ENCODE measurements at regions of chr9 and their contacts with region 1.

Region 1: DNA sequence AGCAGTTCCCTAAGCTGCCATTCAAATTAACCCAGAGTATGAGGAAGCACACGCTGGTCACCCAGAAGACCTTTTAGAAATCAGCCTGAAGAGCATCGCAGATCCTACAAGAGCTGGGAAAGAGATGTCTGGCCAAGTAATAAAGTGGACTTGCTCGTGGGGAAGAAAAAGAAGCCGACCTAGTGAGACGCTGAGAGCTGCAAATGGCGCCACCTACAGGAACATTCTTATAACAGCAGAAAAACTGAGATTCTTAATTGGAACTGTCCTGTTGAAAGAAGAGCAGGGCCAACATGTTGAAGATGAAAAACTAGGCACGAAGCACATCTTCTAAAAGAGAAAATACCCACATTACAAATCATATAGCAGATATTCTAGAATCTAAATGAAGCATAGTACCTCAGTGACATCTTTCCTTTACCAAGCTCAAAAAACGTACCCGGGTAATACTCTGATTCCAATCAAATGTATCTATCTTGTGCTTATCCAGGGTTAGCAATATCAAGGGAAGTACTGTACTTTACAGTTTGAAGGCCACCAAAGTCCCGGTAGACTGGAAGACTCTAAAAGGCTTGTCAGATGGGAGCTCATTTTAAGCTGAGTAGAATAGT is 3.9 kb upstream of the GNAQ start:
- DNase-seq: peak; percentile 64
- H3K4me3 Mint-ChIP-seq: no peak overlapping the region
- H3K27ac Mint-ChIP-seq: no peak overlapping the region
- H3K4me1 Mint-ChIP-seq: peaks cover 31% of the 10 kb centered on the region
- H3K27me3 Mint-ChIP-seq: no peaks in the 10 kb centered on the region

Region 2: GRCh38 chr9:77725820-77726219 is 309.7 kb before region 1 on chr9:
- CTCF ChIA-PET with region 1: no interaction called
- POLR2A ChIA-PET with region 1: no interaction called
- intact Hi-C with region 1: loop called (anchors 5 kb)
- DNase-seq: peak; percentile 62
- H3K4me3 Mint-ChIP-seq: no peak overlapping the region
- H3K27ac Mint-ChIP-seq: peak overlapping the region; percentile 77
- H3K4me1 Mint-ChIP-seq: peaks cover 45% of the 10 kb centered on the region
- H3K27me3 Mint-ChIP-seq: no peaks in the 10 kb centered on the region

Region 3: GRCh38 chr9:77841739-77842386 is 193.6 kb before region 1 on chr9:
- CTCF ChIA-PET with region 1: interaction called, 11 read pairs
- POLR2A ChIA-PET with region 1: no interaction called
- intact Hi-C with region 1: loop called (anchors 5 kb)
- DNase-seq: peak; percentile 19
- H3K4me3 Mint-ChIP-seq: no peak overlapping the region
- H3K27ac Mint-ChIP-seq: no peak overlapping the region
- H3K4me1 Mint-ChIP-seq: peaks cover 27% of the 10 kb centered on the region
- H3K27me3 Mint-ChIP-seq: no peaks in the 10 kb centered on the region

Region 4: GRCh38 chr9:77854258-77854916 is 181.1 kb before region 1 on chr9:
- CTCF ChIA-PET with region 1: no interaction called
- POLR2A ChIA-PET with region 1: no interaction called
- intact Hi-C with region 1: no loop called
- DNase-seq: no peak
- H3K4me3 Mint-ChIP-seq: no peak overlapping the region
- H3K27ac Mint-ChIP-seq: no peak overlapping the region
- H3K4me1 Mint-ChIP-seq: peaks cover 28% of the 10 kb centered on the region
- H3K27me3 Mint-ChIP-seq: no peaks in the 10 kb centered on the region

Region 5: DNA sequence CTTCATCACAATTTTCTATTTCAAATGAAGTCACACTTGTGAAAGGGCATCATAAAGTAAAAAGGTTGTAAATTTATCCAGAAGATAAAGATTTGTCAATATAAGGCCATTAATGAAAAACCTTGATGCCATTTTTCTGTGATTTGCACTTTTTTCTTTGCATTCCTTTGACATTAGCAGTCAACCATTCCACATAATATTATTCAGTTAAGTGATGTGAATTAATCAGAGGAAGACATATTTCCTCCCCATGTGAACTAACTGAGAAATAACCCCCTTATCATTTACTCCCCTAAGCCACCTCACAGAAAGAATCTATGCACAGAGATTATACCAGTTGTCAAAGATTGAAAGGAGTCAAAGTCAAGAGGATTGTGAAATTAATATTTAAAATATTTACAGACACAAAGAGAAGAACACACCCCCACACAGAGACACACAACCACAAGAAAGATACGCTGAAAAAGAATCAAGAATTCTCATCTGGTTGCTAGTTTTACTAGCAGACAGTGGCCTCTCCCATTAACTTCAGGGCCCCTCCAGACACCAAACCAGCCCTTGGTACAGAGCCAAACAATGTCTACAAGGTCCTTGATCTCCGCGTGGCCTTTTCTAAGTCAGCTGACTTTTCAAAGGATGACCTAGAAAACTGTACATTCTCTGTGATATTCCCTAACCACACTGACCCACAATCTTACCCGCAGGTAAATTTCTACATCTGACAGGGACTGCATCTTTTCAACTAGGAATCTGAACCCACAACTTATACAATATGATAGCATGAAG is 33.3 kb before region 1 on chr9:
- CTCF ChIA-PET with region 1: interaction called, 7 read pairs
- POLR2A ChIA-PET with region 1: no interaction called
- intact Hi-C with region 1: loop called (anchors 2 kb)
- DNase-seq: no peak
- H3K4me3 Mint-ChIP-seq: no peak overlapping the region
- H3K27ac Mint-ChIP-seq: no peak overlapping the region
- H3K4me1 Mint-ChIP-seq: peaks cover 59% of the 10 kb centered on the region
- H3K27me3 Mint-ChIP-seq: no peaks in the 10 kb centered on the region

Region 6: GRCh38 chr9:78074385-78075291 is 39.1 kb after region 1 on chr9:
- CTCF ChIA-PET with region 1: interaction called, 10 read pairs
- POLR2A ChIA-PET with region 1: no interaction called
- intact Hi-C with region 1: loop called (anchors 5 kb)
- DNase-seq: peak; percentile 45
- H3K4me3 Mint-ChIP-seq: peak overlapping the region; percentile 3
- H3K27ac Mint-ChIP-seq: peak overlapping the region; percentile 77
- H3K4me1 Mint-ChIP-seq: peaks cover 49% of the 10 kb centered on the region
- H3K27me3 Mint-ChIP-seq: no peaks in the 10 kb centered on the region

Region 7: DNA sequence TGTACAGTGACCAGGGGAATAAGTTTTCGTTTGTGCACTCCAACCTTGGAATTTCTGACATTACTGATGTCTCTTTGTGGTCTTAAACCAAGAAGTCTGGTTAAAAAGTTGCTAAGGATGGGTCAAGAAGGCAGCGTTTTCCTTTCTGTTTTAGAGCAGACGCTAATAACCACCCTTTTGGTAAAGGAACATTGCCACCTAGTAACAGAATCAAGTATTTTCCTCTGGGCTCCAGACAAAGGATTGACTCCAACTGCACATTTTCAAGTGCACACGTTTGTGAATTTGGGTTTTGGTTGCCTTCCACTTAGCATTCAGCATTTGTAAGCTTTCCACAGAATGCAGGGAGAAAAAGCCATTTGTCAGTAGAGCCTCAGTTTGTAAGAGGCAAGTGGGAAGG is 178.2 kb after region 1 on chr9:
- CTCF ChIA-PET with region 1: interaction called, 3 read pairs
- POLR2A ChIA-PET with region 1: interaction called, 3 read pairs
- intact Hi-C with region 1: loop called (anchors 2 kb)
- DNase-seq: no peak
- H3K4me3 Mint-ChIP-seq: no peak overlapping the region
- H3K27ac Mint-ChIP-seq: no peak overlapping the region
- H3K4me1 Mint-ChIP-seq: peaks cover 40% of the 10 kb centered on the region
- H3K27me3 Mint-ChIP-seq: no peaks in the 10 kb centered on the region

Region 8: DNA sequence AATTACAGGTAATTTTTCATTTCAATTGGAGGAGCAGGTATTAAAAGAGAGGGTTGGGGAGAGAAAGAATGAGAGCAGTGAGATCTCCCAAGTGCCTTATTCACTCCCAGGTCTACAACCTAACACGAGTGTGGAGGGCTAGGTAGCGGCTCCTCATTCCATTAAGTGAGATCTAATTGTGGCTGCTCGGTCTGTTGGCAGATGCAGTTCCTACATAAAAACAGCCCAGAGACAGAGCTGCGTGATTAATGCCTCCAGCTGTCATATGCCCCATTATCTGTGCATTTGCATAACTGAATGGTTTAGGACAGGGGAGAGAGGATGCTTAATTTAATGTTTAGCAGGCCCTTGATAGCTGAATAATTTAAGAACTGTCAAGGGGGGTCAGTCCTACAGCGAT is 362.0 kb after region 1 on chr9:
- CTCF ChIA-PET with region 1: no interaction called
- POLR2A ChIA-PET with region 1: no interaction called
- intact Hi-C with region 1: no loop called
- DNase-seq: no peak
- H3K4me3 Mint-ChIP-seq: no peak overlapping the region
- H3K27ac Mint-ChIP-seq: no peak overlapping the region
- H3K4me1 Mint-ChIP-seq: no peaks in the 10 kb centered on the region
- H3K27me3 Mint-ChIP-seq: peaks cover 2% of the 10 kb centered on the region